Mammary epithelial cell (primary cell): ENCODE measurements at regions of chr6 and their contacts with region 1.

Region 1: GRCh38 chr6:162849269-162849668 is 121.5 kb downstream of the PACRG start:
- DNase-seq: no peak
- H3K4me3 ChIP-seq: no peak overlapping the region
- H3K27ac ChIP-seq: no peak overlapping the region
- H3K4me1 ChIP-seq: no peaks in the 10 kb centered on the region
- H3K27me3 ChIP-seq: no peaks in the 10 kb centered on the region
- CTCF ChIP-seq: no peak

Region 2: GRCh38 chr6:162798546-162799266 is 50.6 kb before region 1 on chr6:
- CTCF ChIA-PET with region 1: no interaction called
- dilution Hi-C with region 1: loop called (anchors 5 kb)
- in situ Hi-C with region 1: no loop called
- intact Hi-C with region 1: no loop called
- DNase-seq: no peak
- H3K4me3 ChIP-seq: no peak overlapping the region
- H3K27ac ChIP-seq: no peak overlapping the region
- H3K4me1 ChIP-seq: no peaks in the 10 kb centered on the region
- H3K27me3 ChIP-seq: no peaks in the 10 kb centered on the region
- CTCF ChIP-seq: no peak